Posterior cingulate gyrus (tissue), 11 donors: ENCODE measurements at regions of chr22 and their contacts with region 1.

Region 1: GRCh38 chr22:44080936-44081861 is 57.1 kb downstream of the PARVB start:
- DNase-seq: peak; percentile 64 to 95 (median 80)

Region 2: GRCh38 chr22:43993027-43993760 is 88.0 kb before region 1 on chr22:
- intact Hi-C with region 1: loop called (anchors 5 kb)
- DNase-seq: peak in 6 of 10 donors; percentile 42 to 91 (median 60)

Region 3: DNA sequence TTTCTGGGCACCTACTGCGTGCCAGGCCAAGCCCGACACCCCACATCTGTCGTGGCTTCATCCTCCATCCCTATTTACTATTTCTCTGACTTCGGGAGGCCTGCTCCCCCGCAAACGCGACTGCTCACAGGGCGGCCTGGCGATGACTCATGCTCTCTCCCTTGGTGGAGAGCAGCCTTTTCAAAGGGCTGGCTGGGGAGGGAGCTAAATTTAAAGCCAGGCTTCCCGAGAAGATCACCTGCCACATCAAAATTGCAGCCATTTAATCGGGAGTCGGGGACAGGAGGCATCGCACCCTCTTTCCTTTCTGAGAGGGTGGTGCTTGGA is 256.4 kb after region 1 on chr22:
- intact Hi-C with region 1: loop called (anchors 10 kb)
- DNase-seq: peak in 8 of 10 donors; percentile 52 to 96 (median 75)

Region 4: GRCh38 chr22:44625981-44626687 is 544.9 kb after region 1 on chr22:
- intact Hi-C with region 1: loop called (anchors 1 kb)
- DNase-seq: peak; percentile 45 to 95 (median 78)